ENCODE measurements at regions of chr4 and their contacts with region 1.

Region 1: GRCh38 chr4:73258686-73259570 is at the start of gene ANKRD17:
- DNase-seq: peak; percentile 97
- H3K4me3 ChIP-seq: peak within 1 kb of the TSS; percentile 61 to 93 (median 91)
- H3K27ac ChIP-seq: peak within 1 kb of the TSS; percentile 91
- H3K4me1 ChIP-seq: peaks cover 19% of the 10 kb centered on the region
- H3K27me3 ChIP-seq: no peaks in the 10 kb centered on the region
- CTCF ChIP-seq: no peak
- POLR2A ChIP-seq: peak; percentile 88
- total RNA-seq, gene ANKRD17: 64.4 and 67.7 TPM in 2 replicates

Region 2: GRCh38 chr4:72974694-72975487 is 284.0 kb before region 1 on chr4:
- CTCF ChIA-PET with region 1: no interaction called
- POLR2A ChIA-PET with region 1: interaction called, 5 read pairs
- dilution Hi-C with region 1: no loop called
- intact Hi-C with region 1: loop called (anchors 2 kb)
- DNase-seq: peak; percentile 78
- H3K4me3 ChIP-seq: peak overlapping the region in 1 of 3 experiments; percentile 30
- H3K27ac ChIP-seq: peak overlapping the region; percentile 91
- H3K4me1 ChIP-seq: peaks cover 43% of the 10 kb centered on the region
- H3K27me3 ChIP-seq: no peaks in the 10 kb centered on the region
- CTCF ChIP-seq: no peak
- POLR2A ChIP-seq: peak; percentile 33

Region 3: GRCh38 chr4:73069338-73070073 is 189.4 kb before region 1 on chr4 and contains the start of gene COX18:
- CTCF ChIA-PET with region 1: interaction called, 12 read pairs
- POLR2A ChIA-PET with region 1: interaction called, 6 read pairs
- dilution Hi-C with region 1: no loop called
- intact Hi-C with region 1: loop called (anchors 1 kb)
- DNase-seq: peak; percentile 99
- H3K4me3 ChIP-seq: peak within 1 kb of the TSS; percentile 34 to 87 (median 67)
- H3K27ac ChIP-seq: peak within 1 kb of the TSS; percentile 90
- H3K4me1 ChIP-seq: peaks cover 15% of the 10 kb centered on the region
- H3K27me3 ChIP-seq: no peaks in the 10 kb centered on the region
- CTCF ChIP-seq: no peak
- POLR2A ChIP-seq: peak; percentile 92
- total RNA-seq, gene COX18: 10.6 and 13.0 TPM in 2 replicates

Region 4: DNA sequence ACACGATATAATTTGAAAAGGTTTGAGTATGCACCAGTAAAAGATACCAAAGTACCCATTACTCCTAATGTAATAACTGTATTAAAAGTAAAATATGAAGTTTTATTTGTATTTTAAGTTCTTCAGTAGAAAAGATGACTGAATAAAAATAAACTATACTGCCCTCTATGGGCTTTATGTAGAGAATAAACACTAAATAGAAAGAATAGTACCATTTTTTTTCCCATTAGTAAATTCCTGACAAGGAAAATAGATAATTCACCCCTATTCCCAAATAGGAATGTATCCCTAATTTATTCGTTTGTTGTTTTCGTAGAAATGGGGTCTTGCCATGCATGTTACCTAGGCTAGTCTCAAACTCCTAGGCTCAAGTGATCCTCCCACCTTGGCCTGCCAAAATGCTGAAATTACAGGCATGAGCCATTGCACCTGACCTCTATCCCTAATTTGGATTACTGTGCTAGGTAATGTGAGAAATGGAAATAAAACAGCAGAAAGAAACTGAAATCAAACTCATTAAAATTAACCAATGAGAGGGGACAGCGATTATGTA is 115.9 kb before region 1 on chr4:
- CTCF ChIA-PET with region 1: interaction called, 11 read pairs
- POLR2A ChIA-PET with region 1: no interaction called
- dilution Hi-C with region 1: no loop called
- intact Hi-C with region 1: loop called (anchors 2 kb)
- DNase-seq: peak; percentile 8
- H3K4me3 ChIP-seq: no peak overlapping the region
- H3K27ac ChIP-seq: no peak overlapping the region
- H3K4me1 ChIP-seq: no peaks in the 10 kb centered on the region
- H3K27me3 ChIP-seq: no peaks in the 10 kb centered on the region
- CTCF ChIP-seq: peak in 1 of 2 donors; percentile 11
- POLR2A ChIP-seq: no peak

Region 5: GRCh38 chr4:73222466-73223257 is 36.3 kb before region 1 on chr4:
- CTCF ChIA-PET with region 1: interaction called, 12 read pairs
- POLR2A ChIA-PET with region 1: no interaction called
- dilution Hi-C with region 1: no loop called
- intact Hi-C with region 1: loop called (anchors 1 kb)
- DNase-seq: peak; percentile 96
- H3K4me3 ChIP-seq: peak overlapping the region; percentile 53 to 99 (median 91)
- H3K27ac ChIP-seq: peak overlapping the region; percentile 93
- H3K4me1 ChIP-seq: peaks cover 20% of the 10 kb centered on the region
- H3K27me3 ChIP-seq: no peaks in the 10 kb centered on the region
- CTCF ChIP-seq: no peak
- POLR2A ChIP-seq: peak; percentile 86

Region 6: DNA sequence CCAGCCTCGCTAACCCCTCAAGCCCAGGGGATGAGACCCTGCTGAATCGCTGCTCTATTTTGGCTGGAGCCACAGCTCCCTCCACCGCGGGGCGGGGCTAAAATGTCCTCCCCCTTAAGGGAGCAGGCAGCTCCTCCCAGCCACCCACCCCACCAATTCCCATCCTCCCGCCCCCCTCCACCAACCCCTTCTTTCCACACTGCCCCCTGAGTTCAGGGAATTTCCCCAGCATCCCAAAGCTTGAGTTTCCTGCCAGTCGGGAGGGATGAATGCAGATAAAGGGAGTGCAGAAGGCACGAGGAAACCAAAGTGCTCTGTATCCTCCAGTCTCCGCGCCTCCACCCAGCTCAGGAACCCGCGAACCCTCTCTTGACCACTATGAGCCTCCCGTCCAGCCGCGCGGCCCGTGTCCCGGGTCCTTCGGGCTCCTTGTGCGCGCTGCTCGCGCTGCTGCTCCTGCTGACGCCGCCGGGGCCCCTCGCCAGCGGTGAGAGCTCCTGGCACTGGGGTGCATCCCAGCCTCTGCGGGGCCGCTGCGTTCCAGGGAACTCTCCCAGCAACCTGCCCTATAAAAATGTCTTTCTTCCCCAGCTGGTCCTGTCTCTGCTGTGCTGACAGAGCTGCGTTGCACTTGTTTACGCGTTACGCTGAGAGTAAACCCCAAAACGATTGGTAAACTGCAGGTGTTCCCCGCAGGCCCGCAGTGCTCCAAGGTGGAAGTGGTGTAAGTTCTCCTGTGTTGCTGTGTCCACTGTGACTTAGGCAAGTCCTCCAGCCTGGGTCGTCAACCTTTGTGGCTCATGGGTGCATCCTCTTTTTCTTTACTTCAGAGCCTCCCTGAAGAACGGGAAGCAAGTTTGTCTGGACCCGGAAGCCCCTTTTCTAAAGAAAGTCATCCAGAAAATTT is 577.7 kb after region 1 on chr4 and contains the start of gene CXCL6:
- CTCF ChIA-PET with region 1: no interaction called
- POLR2A ChIA-PET with region 1: no interaction called
- dilution Hi-C with region 1: no loop called
- intact Hi-C with region 1: no loop called
- DNase-seq: peak; percentile 40
- H3K4me3 ChIP-seq: peak within 1 kb of the TSS; percentile 2 to 56 (median 30)
- H3K27ac ChIP-seq: no peak within 1 kb of the TSS
- H3K4me1 ChIP-seq: peaks cover 12% of the 10 kb centered on the region
- H3K27me3 ChIP-seq: no peaks in the 10 kb centered on the region
- CTCF ChIP-seq: no peak
- POLR2A ChIP-seq: no peak
- total RNA-seq, gene CXCL6: 0.25 and 1.2 TPM in 2 replicates

Region 7: DNA sequence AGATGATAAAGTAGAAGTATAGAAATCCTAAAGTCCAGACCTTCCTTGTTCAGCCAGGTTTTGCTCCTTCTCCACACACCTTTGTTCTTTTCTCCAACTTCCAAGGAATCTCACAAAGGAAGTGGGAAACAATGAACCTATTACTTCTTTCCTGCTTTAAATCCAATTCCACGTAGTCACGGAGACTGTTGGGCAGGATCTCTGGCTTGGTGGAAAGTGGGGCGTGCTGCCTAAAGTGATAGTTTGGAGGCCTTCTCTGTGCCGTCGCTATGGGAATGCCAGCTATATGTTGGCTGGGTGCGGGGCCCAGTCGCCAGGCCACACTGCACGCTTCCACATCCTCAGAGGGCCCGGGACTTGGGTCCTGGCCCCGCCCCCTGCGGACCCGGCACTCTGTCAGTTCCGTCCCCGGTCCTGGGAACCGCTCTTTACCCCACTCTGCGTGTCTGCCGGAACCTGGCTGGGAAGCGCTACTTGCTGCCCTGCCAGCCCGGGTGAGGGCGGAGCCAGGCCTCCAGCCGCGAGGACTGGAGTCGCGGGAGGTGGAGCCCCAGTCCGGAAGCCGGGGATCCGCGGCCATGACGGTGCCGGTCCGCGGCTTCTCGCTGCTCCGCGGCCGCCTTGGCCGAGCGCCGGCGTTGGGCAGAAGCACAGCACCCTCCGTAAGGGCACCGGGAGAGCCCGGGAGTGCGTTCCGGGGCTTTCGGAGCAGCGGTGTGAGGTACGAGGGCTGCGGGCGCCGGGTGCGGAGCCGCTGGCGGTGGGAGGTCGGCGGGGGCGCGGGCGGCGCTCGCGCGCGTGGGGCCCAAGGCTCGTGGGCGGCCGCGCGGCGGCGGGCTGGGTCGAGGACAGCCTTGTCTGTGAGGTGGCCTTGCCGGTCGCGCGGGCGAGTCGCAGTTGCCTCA is 898.9 kb after region 1 on chr4 and contains the start of gene MTHFD2L:
- CTCF ChIA-PET with region 1: no interaction called
- POLR2A ChIA-PET with region 1: no interaction called
- dilution Hi-C with region 1: no loop called
- intact Hi-C with region 1: loop called (anchors 2 kb)
- DNase-seq: peak; percentile 96
- H3K4me3 ChIP-seq: peak within 1 kb of the TSS; percentile 73 to 97 (median 76)
- H3K27ac ChIP-seq: peak within 1 kb of the TSS; percentile 90
- H3K4me1 ChIP-seq: peaks cover 29% of the 10 kb centered on the region
- H3K27me3 ChIP-seq: no peaks in the 10 kb centered on the region
- CTCF ChIP-seq: no peak
- POLR2A ChIP-seq: peak; percentile 88
- total RNA-seq, gene MTHFD2L: 12.4 and 15.2 TPM in 2 replicates

Measured in endothelial cell of umbilical vein (primary cell).